ENCODE measurements at regions of chr1 and their contacts with region 1.

Region 1: DNA sequence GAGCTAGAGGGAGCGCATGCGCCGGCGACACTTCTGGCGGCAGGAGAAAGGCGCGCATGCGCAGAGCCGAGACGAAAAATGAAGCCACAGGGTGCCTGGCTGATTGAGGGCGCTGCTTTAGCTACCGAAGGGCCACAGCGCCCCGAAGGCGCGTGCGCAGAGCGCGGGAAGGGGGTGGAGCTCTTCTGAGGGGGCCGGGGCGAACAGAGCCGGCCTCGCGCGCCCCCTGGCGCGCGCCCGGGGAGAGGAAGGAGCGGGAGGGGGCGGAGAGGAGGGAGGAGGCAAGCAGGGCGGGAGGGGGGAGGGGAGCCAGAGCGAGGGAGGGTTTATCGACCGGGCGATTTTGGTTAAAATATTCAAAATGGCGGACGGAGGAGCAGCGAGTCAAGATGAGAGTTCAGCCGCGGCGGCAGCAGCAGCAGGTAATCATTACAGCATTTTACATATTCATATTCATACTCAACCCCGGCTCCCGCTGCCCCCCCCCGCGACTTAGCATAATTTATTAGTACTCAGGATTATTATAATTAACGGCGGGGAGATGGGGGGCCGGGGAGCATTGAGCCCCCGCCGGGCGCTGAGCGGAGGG is at the start of gene POU2F1:
- DNase-seq: peak; percentile 99
- H3K4me3 Mint-ChIP-seq: peak within 1 kb of the TSS; percentile 98
- H3K27ac Mint-ChIP-seq: peak within 1 kb of the TSS; percentile 93
- H3K4me1 Mint-ChIP-seq: peaks cover 40% of the 10 kb centered on the region
- H3K27me3 Mint-ChIP-seq: no peaks in the 10 kb centered on the region
- total RNA-seq, gene POU2F1: 17.4 to 20.4 TPM

Region 2: GRCh38 chr1:166910396-166910994 is 310.1 kb before region 1 on chr1:
- CTCF ChIA-PET with region 1: interaction called, 20 read pairs
- POLR2A ChIA-PET with region 1: interaction called, 14 read pairs
- DNase-seq: peak; percentile 83
- H3K4me3 Mint-ChIP-seq: no peak overlapping the region
- H3K27ac Mint-ChIP-seq: no peak overlapping the region
- H3K4me1 Mint-ChIP-seq: peaks cover 41% of the 10 kb centered on the region
- H3K27me3 Mint-ChIP-seq: peaks cover 6% of the 10 kb centered on the region

Region 3: DNA sequence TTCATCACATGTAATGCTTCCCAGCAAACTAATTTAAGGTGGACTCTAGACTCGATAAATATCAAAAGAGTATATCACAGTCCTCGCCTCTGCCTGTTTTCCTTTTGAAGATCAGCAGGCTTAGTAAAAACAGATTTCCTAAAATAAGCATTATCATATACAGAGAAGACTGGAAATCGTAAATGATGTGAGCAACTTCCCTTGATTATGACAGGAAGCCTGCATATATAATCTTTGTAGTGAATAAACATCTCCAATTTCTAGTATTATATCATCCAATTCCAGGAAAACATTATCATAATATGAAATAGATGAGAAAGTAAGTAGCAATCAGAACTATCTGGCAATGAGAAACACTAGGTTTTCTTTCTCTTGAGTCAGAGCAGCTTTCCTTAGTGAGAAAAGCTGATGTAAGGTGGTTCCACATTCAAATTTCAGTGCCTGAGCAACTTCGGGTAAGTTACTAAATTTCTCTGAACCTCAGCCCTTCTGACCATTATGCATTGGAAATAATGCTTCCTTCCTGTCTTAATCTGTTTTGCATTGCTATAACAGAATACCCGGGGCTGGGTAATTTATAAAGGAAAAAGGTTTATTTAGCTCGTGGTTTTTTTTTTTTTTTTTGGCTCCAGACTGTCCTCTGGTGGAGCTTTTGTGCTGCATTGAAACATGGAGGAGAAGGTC is 12.5 kb before region 1 on chr1:
- CTCF ChIA-PET with region 1: interaction called, 25 read pairs
- POLR2A ChIA-PET with region 1: interaction called, 15 read pairs
- DNase-seq: no peak
- H3K4me3 Mint-ChIP-seq: peak overlapping the region; percentile 6
- H3K27ac Mint-ChIP-seq: peak overlapping the region; percentile 42
- H3K4me1 Mint-ChIP-seq: peaks cover 20% of the 10 kb centered on the region
- H3K27me3 Mint-ChIP-seq: no peaks in the 10 kb centered on the region

Region 4: GRCh38 chr1:167312871-167313270 is 92.2 kb after region 1 on chr1:
- CTCF ChIA-PET with region 1: no interaction called
- POLR2A ChIA-PET with region 1: no interaction called
- DNase-seq: no peak
- H3K4me3 Mint-ChIP-seq: no peak overlapping the region
- H3K27ac Mint-ChIP-seq: no peak overlapping the region
- H3K4me1 Mint-ChIP-seq: peaks cover 15% of the 10 kb centered on the region
- H3K27me3 Mint-ChIP-seq: no peaks in the 10 kb centered on the region

Region 5: GRCh38 chr1:167517535-167518330 is 297.1 kb after region 1 on chr1:
- CTCF ChIA-PET with region 1: interaction called, 8 read pairs
- POLR2A ChIA-PET with region 1: interaction called, 47 read pairs
- DNase-seq: peak; percentile 88
- H3K4me3 Mint-ChIP-seq: peak overlapping the region; percentile 99
- H3K27ac Mint-ChIP-seq: peak overlapping the region; percentile 99
- H3K4me1 Mint-ChIP-seq: peaks cover 45% of the 10 kb centered on the region
- H3K27me3 Mint-ChIP-seq: peaks cover 11% of the 10 kb centered on the region

Region 6: GRCh38 chr1:167627865-167628641 is 407.4 kb after region 1 on chr1:
- CTCF ChIA-PET with region 1: interaction called, 6 read pairs
- POLR2A ChIA-PET with region 1: interaction called, 10 read pairs
- DNase-seq: peak; percentile 88
- H3K4me3 Mint-ChIP-seq: peak overlapping the region; percentile 87
- H3K27ac Mint-ChIP-seq: peak overlapping the region; percentile 97
- H3K4me1 Mint-ChIP-seq: peaks cover 58% of the 10 kb centered on the region
- H3K27me3 Mint-ChIP-seq: no peaks in the 10 kb centered on the region

Region 7: DNA sequence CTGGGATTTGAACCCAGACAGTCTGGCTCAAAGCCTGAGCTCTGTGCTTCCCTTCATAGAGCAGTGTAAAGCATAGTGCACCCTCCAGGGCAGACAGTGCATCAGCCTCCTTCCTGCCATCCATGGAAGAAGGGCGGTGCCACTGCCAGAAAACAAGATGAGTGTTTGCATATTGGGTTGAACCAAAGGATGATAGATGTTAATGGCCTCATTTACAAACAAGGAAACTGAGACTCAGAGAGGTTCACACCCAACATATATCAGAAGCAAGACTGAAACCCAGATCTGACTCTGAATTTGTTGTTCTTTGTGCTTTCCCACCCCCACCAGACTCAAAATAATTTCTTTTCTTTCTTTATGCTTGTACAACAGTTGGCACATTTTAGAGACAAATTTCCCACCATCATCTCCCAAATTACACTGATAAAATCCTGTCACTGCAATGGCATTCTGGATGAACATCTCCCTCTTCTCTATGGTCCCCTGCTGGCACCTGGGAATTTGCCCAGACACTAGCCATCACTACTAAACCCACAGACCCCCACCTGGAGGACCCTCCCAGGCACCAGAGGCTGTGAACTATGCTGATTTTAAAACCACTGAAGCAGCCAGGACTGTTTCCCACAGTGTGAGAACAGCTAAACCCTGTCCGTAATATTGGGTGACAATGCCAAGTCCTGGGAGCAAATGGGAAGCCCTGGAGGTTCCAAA is 455.7 kb after region 1 on chr1:
- CTCF ChIA-PET with region 1: no interaction called
- POLR2A ChIA-PET with region 1: no interaction called
- DNase-seq: no peak
- H3K4me3 Mint-ChIP-seq: no peak overlapping the region
- H3K27ac Mint-ChIP-seq: no peak overlapping the region
- H3K4me1 Mint-ChIP-seq: peaks cover 46% of the 10 kb centered on the region
- H3K27me3 Mint-ChIP-seq: no peaks in the 10 kb centered on the region